Activated CD4-positive, alpha-beta T cell treated with anti-CD3 and anti-CD28 coated beads for 36 hours (primary cell): ENCODE measurements at regions of chr1 and their contacts with region 1.

Region 1: DNA sequence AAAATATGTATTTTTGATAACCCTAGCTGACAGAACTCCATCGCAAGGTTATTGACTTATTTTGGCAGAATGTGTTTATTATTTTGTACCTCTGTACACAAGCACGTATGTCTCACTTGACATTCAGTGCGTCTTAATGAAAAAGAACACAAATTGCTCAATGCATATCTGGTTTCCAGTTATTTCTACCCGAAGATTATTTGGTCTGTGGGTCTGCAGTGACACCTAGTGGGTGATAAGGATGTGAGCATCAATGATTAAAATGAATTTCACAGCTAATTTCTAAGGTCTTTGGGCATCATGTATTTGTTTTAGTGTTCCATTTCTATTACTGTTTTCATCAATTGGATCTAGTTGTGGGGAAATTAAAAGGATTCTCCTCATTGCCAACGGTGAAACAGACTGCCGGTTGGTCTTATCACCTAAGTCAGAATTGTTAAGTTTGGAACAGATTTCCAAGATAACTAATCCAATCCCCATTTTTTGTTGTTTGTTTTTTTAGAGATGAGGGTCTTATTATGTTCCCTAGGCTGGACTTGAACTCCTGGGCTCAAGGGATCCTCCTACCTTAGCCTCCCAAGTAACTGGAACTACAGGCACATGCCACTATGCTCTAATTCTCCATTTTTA is 13.9 kb downstream of the DDX20 start:
- DNase-seq: peak; percentile 66
- ATAC-seq: no peak
- H3K4me3 Mint-ChIP-seq: no peak overlapping the region
- H3K27ac Mint-ChIP-seq: no peak overlapping the region
- H3K4me1 Mint-ChIP-seq: peaks cover 12% of the 10 kb centered on the region
- H3K27me3 Mint-ChIP-seq: no peaks in the 10 kb centered on the region

Region 2: GRCh38 chr1:111030590-111030989 is 739.0 kb before region 1 on chr1:
- CTCF ChIA-PET with region 1: interaction called, 3 read pairs
- POLR2A ChIA-PET with region 1: no interaction called
- intact Hi-C with region 1: loop called in 1 of 2 experiments (anchors 5 kb)
- DNase-seq: peak; percentile 69
- ATAC-seq: peak; percentile 80
- H3K4me3 Mint-ChIP-seq: no peak overlapping the region
- H3K27ac Mint-ChIP-seq: no peak overlapping the region
- H3K4me1 Mint-ChIP-seq: no peaks in the 10 kb centered on the region
- H3K27me3 Mint-ChIP-seq: peaks cover 5% of the 10 kb centered on the region

Region 3: DNA sequence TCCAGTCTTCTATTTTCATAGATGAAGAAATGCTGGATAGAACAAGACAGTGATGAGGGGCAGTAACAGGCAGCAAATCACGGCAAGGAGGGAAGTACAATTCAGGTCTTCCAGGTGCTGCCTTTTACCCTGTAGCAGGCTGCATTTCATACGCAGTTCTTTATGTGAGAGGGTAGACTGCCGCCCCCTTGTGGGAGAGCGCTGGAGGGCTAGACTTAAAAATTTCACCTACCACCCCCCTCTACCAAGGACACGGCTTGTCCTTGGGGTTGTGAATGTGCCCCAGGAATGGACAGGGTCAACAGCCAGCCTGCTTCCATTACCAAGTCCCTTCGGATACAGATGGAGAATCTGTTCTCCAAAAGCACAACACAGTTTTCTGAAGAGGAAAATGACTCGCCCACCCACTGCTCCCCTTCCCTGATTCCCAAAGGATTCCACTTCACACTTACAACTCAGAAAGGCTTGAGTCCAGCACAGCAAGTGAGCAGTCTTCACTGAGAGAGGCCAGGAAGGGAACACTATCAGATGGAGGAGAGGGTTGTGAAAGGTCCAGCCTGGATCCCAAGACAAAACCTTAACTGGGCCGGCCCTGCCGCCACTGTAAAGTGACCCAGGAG is 327.9 kb before region 1 on chr1:
- CTCF ChIA-PET with region 1: interaction called, 16 read pairs
- POLR2A ChIA-PET with region 1: no interaction called
- intact Hi-C with region 1: no loop called
- DNase-seq: peak; percentile 81
- ATAC-seq: peak; percentile 76
- H3K4me3 Mint-ChIP-seq: no peak overlapping the region
- H3K27ac Mint-ChIP-seq: peak overlapping the region; percentile 72
- H3K4me1 Mint-ChIP-seq: peaks cover 48% of the 10 kb centered on the region
- H3K27me3 Mint-ChIP-seq: no peaks in the 10 kb centered on the region

Region 4: GRCh38 chr1:111481387-111482221 is 288.0 kb before region 1 on chr1:
- CTCF ChIA-PET with region 1: interaction called, 27 read pairs
- POLR2A ChIA-PET with region 1: no interaction called
- intact Hi-C with region 1: loop called in 1 of 2 experiments (anchors 1 kb)
- DNase-seq: peak; percentile 83
- ATAC-seq: peak; percentile 80
- H3K4me3 Mint-ChIP-seq: no peak overlapping the region
- H3K27ac Mint-ChIP-seq: no peak overlapping the region
- H3K4me1 Mint-ChIP-seq: peaks cover 24% of the 10 kb centered on the region
- H3K27me3 Mint-ChIP-seq: no peaks in the 10 kb centered on the region

Region 5: DNA sequence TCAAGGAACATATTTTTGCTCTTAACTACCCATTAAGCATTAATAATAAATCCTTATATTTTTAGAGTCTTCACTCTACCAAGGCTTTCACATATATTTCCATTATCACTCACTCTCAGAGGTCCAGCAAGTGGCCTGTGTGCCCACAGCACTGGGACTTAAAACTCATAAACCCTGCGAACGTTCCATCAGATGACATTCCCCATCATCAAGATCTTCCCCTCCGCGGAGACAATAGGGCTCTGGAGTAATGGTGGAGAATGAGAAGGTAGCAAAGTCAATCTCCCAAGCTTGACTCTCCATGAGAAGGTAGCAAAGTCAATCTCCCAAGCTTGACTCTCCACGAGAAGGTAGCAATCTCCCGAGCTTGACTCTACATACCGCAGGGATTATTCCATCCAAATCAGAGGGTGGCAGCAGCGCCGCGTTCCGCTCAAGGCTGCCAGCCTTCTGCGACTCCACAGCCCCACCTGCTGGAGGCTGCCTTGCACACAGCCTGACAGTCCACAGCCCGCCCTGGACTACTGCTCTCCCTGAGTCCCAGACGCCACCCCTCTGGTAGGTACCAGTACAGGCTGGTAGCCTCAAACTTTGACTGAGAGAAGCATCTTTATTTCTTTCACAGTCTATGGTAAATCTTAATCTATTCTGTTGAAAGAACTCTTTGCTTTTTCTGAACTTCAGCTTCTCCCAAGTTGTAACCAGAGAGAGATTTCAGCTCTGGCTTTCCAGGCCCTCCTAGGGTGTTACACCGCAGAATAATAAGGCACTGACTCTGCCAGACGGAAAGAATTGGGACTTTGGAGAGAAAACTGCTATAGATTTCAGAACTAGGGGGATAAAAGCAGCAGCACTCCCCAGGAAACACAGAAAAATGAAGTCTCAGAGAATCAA is 600.0 kb after region 1 on chr1:
- CTCF ChIA-PET with region 1: no interaction called
- POLR2A ChIA-PET with region 1: no interaction called
- intact Hi-C with region 1: loop called in 1 of 2 experiments (anchors 10 kb)
- DNase-seq: peak; percentile 93
- ATAC-seq: peak; percentile 100
- H3K4me3 Mint-ChIP-seq: no peak overlapping the region
- H3K27ac Mint-ChIP-seq: no peak overlapping the region
- H3K4me1 Mint-ChIP-seq: peaks cover 3% of the 10 kb centered on the region
- H3K27me3 Mint-ChIP-seq: peaks cover 35% of the 10 kb centered on the region